ENCODE measurements at regions of chr7 and their contacts with region 1.

Region 1: GRCh38 chr7:158818325-158819213 is 10.7 kb downstream of the ESYT2 start:
- DNase-seq: peak; percentile 35 to 94 (median 62)
- ATAC-seq: peak; percentile 63
- H3K4me3 ChIP-seq: peak overlapping the region; percentile 58
- H3K4me3 Mint-ChIP-seq: peak overlapping the region; percentile 81
- H3K27ac ChIP-seq: peak overlapping the region; percentile 88 to 96
- H3K27ac Mint-ChIP-seq: peak overlapping the region; percentile 97
- H3K4me1 ChIP-seq: peaks cover 75% of the 10 kb centered on the region
- H3K4me1 Mint-ChIP-seq: peaks cover 90% of the 10 kb centered on the region
- H3K27me3 ChIP-seq: no peaks in the 10 kb centered on the region
- H3K27me3 Mint-ChIP-seq: no peaks in the 10 kb centered on the region
- CTCF ChIP-seq: no peak

Region 2: DNA sequence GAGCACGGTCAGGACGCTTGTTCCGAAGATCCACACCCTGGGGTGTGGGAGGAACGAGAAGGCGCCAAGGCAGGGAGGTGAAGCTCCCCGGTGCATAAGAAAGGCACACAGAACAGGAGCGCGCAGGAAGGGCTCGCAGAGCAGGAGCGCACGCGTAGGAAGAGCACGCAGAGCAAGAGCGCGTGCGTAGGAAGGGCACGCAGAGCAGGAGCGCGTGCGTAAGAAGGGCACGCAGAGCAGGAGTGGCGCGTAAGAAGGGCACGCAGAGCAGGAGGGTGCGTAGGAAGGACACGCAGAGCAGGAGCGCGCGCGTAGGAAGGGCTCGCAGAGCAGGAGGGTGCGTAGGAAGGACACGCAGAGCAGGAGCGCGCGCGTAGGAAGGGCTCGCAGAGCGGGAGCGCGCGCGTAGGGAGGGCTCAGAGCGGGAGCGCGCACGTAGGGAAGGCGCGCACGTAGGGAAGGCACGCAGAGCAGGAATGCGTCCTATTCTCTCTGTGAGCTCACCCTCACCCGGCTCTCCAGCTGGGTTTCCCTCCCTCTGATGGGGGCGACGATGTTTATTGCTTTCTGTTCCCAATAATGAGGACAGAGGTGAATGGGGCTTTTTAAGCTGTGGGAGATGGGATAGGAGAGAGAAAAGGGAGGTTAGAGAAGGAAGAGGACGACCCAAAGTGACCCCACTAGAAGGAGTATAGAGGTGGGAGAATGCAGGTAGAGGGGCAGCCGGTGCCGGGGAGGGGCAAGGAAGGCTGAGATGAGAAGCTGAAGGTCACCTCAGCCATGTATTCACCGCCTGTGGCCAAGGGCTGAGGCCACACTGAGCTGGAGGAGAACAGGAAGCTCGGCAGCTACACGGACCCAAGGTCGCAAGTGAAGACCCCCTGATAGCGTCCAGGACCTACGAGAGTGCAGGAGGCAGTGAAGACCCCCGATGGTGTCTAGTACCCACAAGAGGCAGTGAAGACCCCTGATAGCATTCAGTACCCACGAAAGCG is 654.2 kb before region 1 on chr7:
- CTCF ChIA-PET with region 1: no interaction called
- POLR2A ChIA-PET with region 1: no interaction called
- intact Hi-C with region 1: no loop called
- DNase-seq: no peak
- ATAC-seq: no peak
- H3K4me3 ChIP-seq: no peak overlapping the region
- H3K4me3 Mint-ChIP-seq: no peak overlapping the region
- H3K27ac ChIP-seq: no peak overlapping the region
- H3K27ac Mint-ChIP-seq: no peak overlapping the region
- H3K4me1 ChIP-seq: no peaks in the 10 kb centered on the region
- H3K4me1 Mint-ChIP-seq: no peaks in the 10 kb centered on the region
- H3K27me3 ChIP-seq: no peaks in the 10 kb centered on the region
- H3K27me3 Mint-ChIP-seq: no peaks in the 10 kb centered on the region
- CTCF ChIP-seq: no peak

Region 3: DNA sequence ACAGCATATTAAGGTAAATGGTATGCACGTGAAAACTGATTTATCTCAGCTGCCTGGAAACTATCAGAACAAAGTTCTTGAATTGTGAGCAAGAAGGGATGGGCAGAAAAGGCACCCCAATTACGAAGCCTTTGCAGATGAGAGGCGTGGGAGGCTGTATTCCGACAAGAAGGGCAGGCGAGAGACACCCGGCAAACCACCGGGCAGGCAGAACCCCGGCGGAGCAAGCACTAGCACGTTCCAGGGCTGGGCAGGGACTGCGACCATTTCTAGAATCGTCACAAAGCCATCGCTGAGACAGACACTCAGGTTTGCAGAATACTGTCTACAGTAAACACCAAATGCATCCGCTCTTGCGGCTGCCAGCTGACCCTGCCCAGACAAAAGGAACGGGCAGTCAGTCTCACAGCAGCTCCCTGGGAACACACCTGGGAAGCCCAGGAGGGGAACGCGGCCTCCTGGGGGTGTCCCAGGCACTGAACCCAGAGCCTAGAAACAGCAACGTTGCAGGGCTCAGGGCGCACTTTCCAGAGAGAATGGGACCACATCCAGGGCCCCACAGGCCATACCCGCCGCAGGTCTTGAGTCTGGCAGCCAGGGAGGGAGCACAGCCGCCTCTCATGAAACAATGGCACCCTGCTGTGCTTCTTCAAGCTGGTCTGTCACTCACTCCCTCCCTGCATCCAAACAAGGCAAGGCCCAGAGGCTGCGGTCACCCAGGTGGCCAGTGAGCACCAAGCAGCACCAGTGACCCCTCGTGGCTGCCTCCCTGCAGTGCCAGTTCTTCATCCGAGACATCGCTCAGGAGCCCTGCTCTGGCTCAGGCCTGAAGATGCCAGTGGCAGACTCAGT is 492.8 kb before region 1 on chr7:
- CTCF ChIA-PET with region 1: no interaction called
- POLR2A ChIA-PET with region 1: no interaction called
- intact Hi-C with region 1: no loop called
- DNase-seq: no peak
- ATAC-seq: no peak
- H3K4me3 ChIP-seq: no peak overlapping the region
- H3K4me3 Mint-ChIP-seq: no peak overlapping the region
- H3K27ac ChIP-seq: no peak overlapping the region
- H3K27ac Mint-ChIP-seq: no peak overlapping the region
- H3K4me1 ChIP-seq: no peaks in the 10 kb centered on the region
- H3K4me1 Mint-ChIP-seq: no peaks in the 10 kb centered on the region
- H3K27me3 ChIP-seq: peaks cover 0 to 5% of the 10 kb centered on the region in 2 experiments
- H3K27me3 Mint-ChIP-seq: peaks cover 8% of the 10 kb centered on the region
- CTCF ChIP-seq: no peak

Region 4: DNA sequence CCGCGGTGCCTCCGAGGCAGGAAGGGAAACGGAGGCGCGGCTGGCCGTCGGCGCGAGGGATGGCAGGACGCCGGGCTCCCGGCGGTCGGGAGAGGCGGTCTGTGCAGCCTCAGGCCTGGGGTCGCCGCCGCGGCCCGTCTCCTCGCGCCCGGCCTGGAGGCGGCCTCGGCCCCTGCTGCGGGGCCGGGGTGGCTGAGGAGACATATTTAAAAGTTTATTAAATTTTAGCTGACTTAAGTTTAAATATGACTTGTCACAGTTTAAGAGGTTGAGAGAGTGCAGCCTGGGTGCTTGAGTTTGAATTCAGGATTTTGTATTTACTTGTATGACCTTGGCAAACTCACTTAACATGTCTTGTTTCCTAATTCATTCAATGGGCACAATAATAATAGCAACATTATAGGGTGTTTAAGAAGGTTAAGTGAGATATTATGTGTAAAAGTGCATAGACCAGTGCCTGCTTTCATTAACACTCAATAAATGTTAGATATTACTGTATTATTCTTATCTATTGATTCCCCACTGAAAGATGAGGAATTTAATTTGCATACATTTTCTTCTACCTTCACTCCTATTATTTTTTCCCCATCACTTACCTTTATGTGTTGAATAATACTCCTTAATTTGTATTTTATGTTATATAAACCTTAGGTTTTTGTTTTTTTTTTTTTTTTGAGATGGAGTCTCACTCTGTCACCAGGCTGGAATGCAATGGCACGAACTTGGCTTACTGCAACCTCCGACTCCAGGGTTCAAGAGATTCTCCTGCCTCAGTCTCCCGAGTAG is 38.5 kb after region 1 on chr7:
- CTCF ChIA-PET with region 1: no interaction called
- POLR2A ChIA-PET with region 1: no interaction called
- intact Hi-C with region 1: loop called in 1 of 2 experiments (anchors 5 kb)
- DNase-seq: no peak
- ATAC-seq: peak; percentile 4
- H3K4me3 ChIP-seq: peak overlapping the region; percentile 70
- H3K4me3 Mint-ChIP-seq: peak overlapping the region; percentile 88
- H3K27ac ChIP-seq: peak overlapping the region in 1 of 2 donors; percentile 69
- H3K27ac Mint-ChIP-seq: peak overlapping the region; percentile 45
- H3K4me1 ChIP-seq: peaks cover 16% of the 10 kb centered on the region
- H3K4me1 Mint-ChIP-seq: peaks cover 42% of the 10 kb centered on the region
- H3K27me3 ChIP-seq: no peaks in the 10 kb centered on the region
- H3K27me3 Mint-ChIP-seq: no peaks in the 10 kb centered on the region
- CTCF ChIP-seq: no peak

Region 5: DNA sequence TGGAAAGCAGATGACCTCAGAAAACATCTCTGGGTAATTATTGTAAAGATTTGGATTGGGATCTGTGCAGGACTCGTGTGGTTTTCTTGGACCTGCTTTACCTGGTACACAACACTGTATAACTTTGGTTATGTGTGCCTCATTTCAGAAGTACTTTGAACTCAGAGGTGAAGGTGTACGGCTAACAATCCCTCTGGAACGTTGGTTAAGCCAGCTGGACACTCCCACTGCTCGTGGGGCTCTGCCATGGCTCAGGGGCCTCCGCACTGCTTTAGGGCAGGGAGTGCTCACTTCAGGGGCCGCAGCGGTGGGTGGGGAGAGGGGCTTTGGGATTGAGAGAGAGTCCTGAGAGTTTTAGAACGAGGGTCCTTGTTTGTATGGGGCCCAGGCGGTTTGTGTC is 51.3 kb after region 1 on chr7:
- CTCF ChIA-PET with region 1: no interaction called
- POLR2A ChIA-PET with region 1: no interaction called
- intact Hi-C with region 1: no loop called
- DNase-seq: no peak
- ATAC-seq: no peak
- H3K4me3 ChIP-seq: no peak overlapping the region
- H3K4me3 Mint-ChIP-seq: no peak overlapping the region
- H3K27ac ChIP-seq: no peak overlapping the region
- H3K27ac Mint-ChIP-seq: no peak overlapping the region
- H3K4me1 ChIP-seq: peaks cover 2% of the 10 kb centered on the region
- H3K4me1 Mint-ChIP-seq: peaks cover 13% of the 10 kb centered on the region
- H3K27me3 ChIP-seq: no peaks in the 10 kb centered on the region
- H3K27me3 Mint-ChIP-seq: no peaks in the 10 kb centered on the region
- CTCF ChIP-seq: no peak

Measured in CD4-positive, alpha-beta T cell (primary cell).